Activated CD4-positive, alpha-beta T cell treated with anti-CD3 and anti-CD28 coated beads for 36 hours (primary cell): ENCODE measurements at regions of chr6 and their contacts with region 1.

Region 1: DNA sequence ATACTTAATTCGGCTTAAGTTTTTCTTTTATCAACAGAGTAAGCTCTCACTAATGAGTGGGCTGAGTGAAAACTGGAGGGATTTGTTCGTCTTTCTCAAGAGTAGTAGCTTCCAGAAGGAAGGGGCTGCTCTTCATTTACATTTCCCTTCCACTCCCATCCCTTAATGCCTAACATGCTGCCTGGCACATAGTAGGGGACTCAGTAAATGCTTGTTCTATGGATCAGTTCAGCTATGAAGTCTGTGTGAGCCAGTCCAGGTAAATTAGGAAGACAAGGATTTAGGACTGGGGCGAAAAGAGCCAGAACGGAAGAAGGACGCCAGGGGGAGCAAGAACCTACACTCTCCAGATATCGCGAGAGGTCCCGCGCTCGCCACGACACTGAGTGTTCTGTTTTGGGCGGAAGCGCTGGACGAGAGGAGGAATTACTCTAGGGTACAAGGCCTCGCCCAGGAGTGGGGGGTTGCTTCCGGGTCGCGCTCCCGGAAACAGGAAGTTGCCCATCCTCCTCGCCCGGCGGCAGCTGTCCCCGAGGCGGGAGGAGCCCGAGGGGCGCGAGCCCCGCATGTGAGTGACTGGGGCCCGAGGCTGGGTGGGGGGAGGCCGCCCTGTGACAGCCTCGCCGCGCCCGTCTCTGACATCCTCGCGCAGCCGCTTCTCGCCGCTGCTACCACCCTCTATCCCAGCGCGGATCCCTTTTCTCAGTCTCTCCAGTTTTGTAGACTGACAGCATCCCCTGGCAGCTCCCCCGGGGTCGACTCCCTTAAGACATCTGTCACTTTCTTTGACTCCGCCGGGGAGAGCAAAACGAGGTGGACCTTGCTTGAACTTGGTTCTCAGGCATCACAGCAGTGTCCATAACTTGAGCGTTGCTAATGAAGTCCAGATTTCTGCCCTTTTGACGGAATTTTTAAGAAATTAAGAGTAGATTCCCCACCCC is at the start of gene C6orf89:
- DNase-seq: peak; percentile 99
- ATAC-seq: peak; percentile 100
- H3K4me3 Mint-ChIP-seq: peak within 1 kb of the TSS; percentile 89
- H3K27ac Mint-ChIP-seq: peak within 1 kb of the TSS; percentile 97
- H3K4me1 Mint-ChIP-seq: peaks cover 31% of the 10 kb centered on the region
- H3K27me3 Mint-ChIP-seq: no peaks in the 10 kb centered on the region
- total RNA-seq, gene C6orf89: 29.5 to 36.2 TPM

Region 2: GRCh38 chr6:36650848-36651478 is 234.8 kb before region 1 on chr6:
- CTCF ChIA-PET with region 1: no interaction called
- POLR2A ChIA-PET with region 1: no interaction called
- intact Hi-C with region 1: no loop called
- DNase-seq: no peak
- ATAC-seq: no peak
- H3K4me3 Mint-ChIP-seq: no peak overlapping the region
- H3K27ac Mint-ChIP-seq: no peak overlapping the region
- H3K4me1 Mint-ChIP-seq: no peaks in the 10 kb centered on the region
- H3K27me3 Mint-ChIP-seq: peaks cover 9% of the 10 kb centered on the region

Region 3: GRCh38 chr6:36874443-36875249 is 11.1 kb before region 1 on chr6 and contains the start of gene PPIL1:
- CTCF ChIA-PET with region 1: interaction called, 91 read pairs
- POLR2A ChIA-PET with region 1: interaction called, 7 read pairs
- intact Hi-C with region 1: loop called (anchors 1 kb)
- DNase-seq: peak; percentile 90
- ATAC-seq: peak; percentile 80
- H3K4me3 Mint-ChIP-seq: peak within 1 kb of the TSS; percentile 98
- H3K27ac Mint-ChIP-seq: peak within 1 kb of the TSS; percentile 99
- H3K4me1 Mint-ChIP-seq: peaks cover 45% of the 10 kb centered on the region
- H3K27me3 Mint-ChIP-seq: peaks cover 7% of the 10 kb centered on the region
- total RNA-seq, gene PPIL1: 45.9 to 46.0 TPM

Region 4: DNA sequence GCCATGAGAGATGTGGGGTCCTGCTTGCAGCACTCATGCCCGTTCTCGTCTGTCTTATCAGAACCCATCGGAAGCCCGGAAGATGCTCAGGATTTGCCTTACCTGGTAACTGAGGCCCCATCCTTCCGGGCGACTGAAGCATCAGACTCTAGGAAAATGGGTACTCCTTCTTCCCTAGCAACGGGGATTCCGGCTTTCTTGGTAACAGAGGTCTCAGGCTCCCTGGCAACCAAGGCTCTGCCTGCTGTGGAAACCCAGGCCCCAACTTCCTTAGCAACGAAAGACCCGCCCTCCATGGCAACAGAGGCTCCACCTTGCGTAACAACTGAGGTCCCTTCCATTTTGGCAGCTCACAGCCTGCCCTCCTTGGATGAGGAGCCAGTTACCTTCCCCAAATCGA is 77.1 kb after region 1 on chr6:
- CTCF ChIA-PET with region 1: no interaction called
- POLR2A ChIA-PET with region 1: no interaction called
- intact Hi-C with region 1: loop called in 1 of 2 experiments (anchors 5 kb)
- DNase-seq: peak; percentile 88
- ATAC-seq: peak; percentile 84
- H3K4me3 Mint-ChIP-seq: peak overlapping the region; percentile 54
- H3K27ac Mint-ChIP-seq: peak overlapping the region; percentile 64
- H3K4me1 Mint-ChIP-seq: peaks cover 45% of the 10 kb centered on the region
- H3K27me3 Mint-ChIP-seq: no peaks in the 10 kb centered on the region

Region 5: DNA sequence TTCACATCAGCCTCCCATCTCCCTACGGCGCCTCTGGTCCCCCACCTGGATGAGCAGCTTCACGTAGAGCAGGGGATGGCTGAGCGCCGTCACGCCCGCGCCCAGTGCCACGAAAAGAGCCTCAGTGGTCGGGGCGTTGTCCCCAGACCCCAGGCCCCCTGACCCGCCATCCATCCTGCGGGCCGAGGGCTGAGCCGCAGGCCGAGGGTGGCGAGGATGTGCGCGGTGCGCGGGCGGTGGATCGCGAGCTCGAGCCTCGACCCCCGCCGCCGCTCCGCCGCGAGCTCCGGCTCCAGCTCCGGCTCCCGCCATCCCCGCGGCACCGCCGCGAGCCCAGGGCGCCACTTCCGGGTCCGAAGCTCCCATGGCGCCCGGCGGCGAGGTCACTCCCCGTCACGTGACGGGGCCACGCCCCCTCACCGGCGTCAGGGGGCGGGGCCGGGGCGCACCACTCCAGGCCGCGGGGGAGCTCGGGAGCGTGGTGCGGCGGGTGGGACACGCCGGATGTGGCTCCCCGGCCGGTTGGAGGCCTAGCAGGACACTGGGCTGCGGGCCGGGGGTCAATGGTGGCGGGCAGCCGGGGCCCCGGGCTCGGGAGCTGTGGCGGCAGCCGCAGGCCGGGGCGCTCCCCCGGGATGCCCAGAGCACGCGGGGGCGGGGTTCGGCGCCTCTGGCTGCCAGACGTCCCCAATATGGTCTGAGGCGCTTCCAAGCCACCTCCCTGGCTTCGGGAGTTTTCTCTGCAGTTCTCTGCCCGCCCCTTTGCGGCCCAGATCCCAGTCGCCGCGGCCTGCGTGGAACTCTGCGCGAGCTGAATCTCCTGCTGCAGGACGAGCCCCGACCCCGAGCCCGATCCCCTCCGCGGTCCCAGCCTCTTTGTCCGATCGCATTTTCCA is 100.3 kb after region 1 on chr6 and contains the start of gene MTCH1:
- CTCF ChIA-PET with region 1: interaction called, 15 read pairs
- POLR2A ChIA-PET with region 1: interaction called, 4 read pairs
- intact Hi-C with region 1: loop called (anchors 1 kb)
- DNase-seq: peak; percentile 93
- ATAC-seq: peak; percentile 80
- H3K4me3 Mint-ChIP-seq: no peak within 1 kb of the TSS
- H3K27ac Mint-ChIP-seq: peak within 1 kb of the TSS; percentile 95
- H3K4me1 Mint-ChIP-seq: peaks cover 18% of the 10 kb centered on the region
- H3K27me3 Mint-ChIP-seq: no peaks in the 10 kb centered on the region
- total RNA-seq, gene MTCH1: 72.9 to 92.9 TPM